ENCODE measurements at regions of chr4 and their contacts with region 1.

Region 1: DNA sequence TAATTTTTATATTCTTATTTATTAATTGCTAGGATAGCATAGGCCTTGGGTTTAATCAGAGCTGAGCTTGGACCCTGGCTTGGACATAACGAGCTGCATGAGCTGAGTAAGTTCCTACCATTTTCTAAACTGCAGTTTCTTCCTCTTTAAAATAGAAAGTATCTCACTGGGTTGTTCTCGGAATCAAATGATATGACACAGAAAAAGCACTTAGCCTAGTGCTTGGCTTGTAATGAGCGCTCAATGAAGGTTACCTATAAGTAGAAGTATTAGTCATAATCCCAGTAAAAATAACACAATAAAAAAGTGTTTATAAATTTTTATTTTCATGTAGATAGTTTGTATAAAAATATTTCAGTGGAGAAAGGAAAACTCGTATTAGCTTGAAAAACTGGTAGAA is 113.3 kb upstream of the PDLIM3 start:
- DNase-seq: no peak
- ATAC-seq: no peak
- H3K4me3 ChIP-seq: no peak overlapping the region
- H3K27ac ChIP-seq: no peak overlapping the region
- H3K4me1 ChIP-seq: peaks cover 31% of the 10 kb centered on the region
- H3K27me3 ChIP-seq: no peaks in the 10 kb centered on the region
- CTCF ChIP-seq: no peak
- EP300 ChIP-seq: no peak
- POLR2A ChIP-seq: no peak
- RAD21 ChIP-seq: no peak

Region 2: DNA sequence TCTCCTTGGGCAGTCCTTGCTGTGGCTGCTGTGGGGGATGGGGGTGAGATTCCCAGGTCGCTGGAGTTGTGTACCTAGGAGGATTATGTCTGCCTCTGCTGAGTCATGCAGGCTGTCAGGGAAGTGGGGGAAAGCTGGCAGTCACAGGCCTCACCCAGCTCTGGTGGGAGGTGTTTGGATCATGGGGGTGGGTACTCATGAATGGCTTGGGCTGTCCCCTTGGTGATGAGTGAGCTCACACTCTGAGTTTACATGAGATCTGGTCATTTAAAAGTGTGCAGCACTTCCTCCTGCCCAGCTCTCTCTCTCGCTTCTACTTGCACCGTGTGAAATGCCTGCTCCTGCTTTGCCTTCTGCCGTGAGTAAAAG is 88.7 kb before region 1 on chr4:
- CTCF ChIA-PET with region 1: no interaction called
- POLR2A ChIA-PET with region 1: no interaction called
- in situ Hi-C with region 1: no loop called
- intact Hi-C with region 1: no loop called
- DNase-seq: peak; percentile 61
- ATAC-seq: peak; percentile 68
- H3K4me3 ChIP-seq: no peak overlapping the region
- H3K27ac ChIP-seq: peak overlapping the region; percentile 35
- H3K4me1 ChIP-seq: peaks cover 15% of the 10 kb centered on the region
- H3K27me3 ChIP-seq: no peaks in the 10 kb centered on the region; a peak in 1 of 5 replicates
- CTCF ChIP-seq: no peak
- EP300 ChIP-seq: no peak
- POLR2A ChIP-seq: no peak
- RAD21 ChIP-seq: no peak

Region 3: GRCh38 chr4:186021461-186022167 is 373.0 kb after region 1 on chr4:
- CTCF ChIA-PET with region 1: no interaction called
- POLR2A ChIA-PET with region 1: no interaction called
- in situ Hi-C with region 1: loop called (anchors 5 kb)
- intact Hi-C with region 1: no loop called
- DNase-seq: peak; percentile 30
- ATAC-seq: peak; percentile 73
- H3K4me3 ChIP-seq: no peak overlapping the region
- H3K27ac ChIP-seq: no peak overlapping the region
- H3K4me1 ChIP-seq: peaks cover 4% of the 10 kb centered on the region; the same call in 1 of the 2 replicates
- H3K27me3 ChIP-seq: peaks cover 3 to 25% of the 10 kb centered on the region in 2 experiments; a peak in 2 of 5 replicates
- CTCF ChIP-seq: peak; percentile 87
- EP300 ChIP-seq: no peak
- POLR2A ChIP-seq: no peak
- RAD21 ChIP-seq: peak; percentile 84

Measured in HepG2 (cell line).